GM12878 (cell line): ENCODE measurements at regions of chr3 and their contacts with region 1.

Region 1: GRCh38 chr3:14915636-14916222 is 31.7 kb upstream of the NR2C2 start:
- DNase-seq: no peak
- ATAC-seq: peak; percentile 76
- H3K4me3 ChIP-seq: no peak overlapping the region
- H3K27ac ChIP-seq: no peak overlapping the region
- H3K4me1 ChIP-seq: no peaks in the 10 kb centered on the region
- H3K27me3 ChIP-seq: peaks cover 0 to 1% of the 10 kb centered on the region in 2 experiments; a peak in 2 of 4 replicates
- CTCF ChIP-seq: peak in 2 of 3 experiments; percentile 13 to 45; a peak in 4 of 6 replicates
- EP300 ChIP-seq: no peak
- POLR2A ChIP-seq: no peak
- RAD21 ChIP-seq: peak; percentile 49

Region 2: GRCh38 chr3:14791343-14791945 is 124.3 kb before region 1 on chr3:
- CTCF ChIA-PET with region 1: interaction called, 46 read pairs
- POLR2A ChIA-PET with region 1: no interaction called
- RAD21 ChIA-PET with region 1: interaction called, 47 read pairs
- SMC1A ChIA-PET with region 1: interaction called, 13 read pairs
- in situ Hi-C with region 1: loop called (anchors 5 kb)
- intact Hi-C with region 1: loop called (anchors 1 kb)
- DNase-seq: no peak
- ATAC-seq: peak; percentile 91
- H3K4me3 ChIP-seq: no peak overlapping the region
- H3K27ac ChIP-seq: no peak overlapping the region
- H3K4me1 ChIP-seq: no peaks in the 10 kb centered on the region
- H3K27me3 ChIP-seq: no peaks in the 10 kb centered on the region; a peak in 1 of 4 replicates
- CTCF ChIP-seq: peak; percentile 63 to 76 (median 76)
- EP300 ChIP-seq: no peak
- POLR2A ChIP-seq: no peak
- RAD21 ChIP-seq: peak; percentile 80